GM12878 (cell line): ENCODE measurements at regions of chr11 and their contacts with region 1.

Region 1: GRCh38 chr11:126431401-126432064 is 76.0 kb downstream of the ST3GAL4 start:
- DNase-seq: no peak
- ATAC-seq: no peak
- H3K4me3 ChIP-seq: no peak overlapping the region
- H3K27ac ChIP-seq: no peak overlapping the region
- H3K4me1 ChIP-seq: peaks cover 9% of the 10 kb centered on the region; the same call in 1 of the 2 replicates
- H3K27me3 ChIP-seq: no peaks in the 10 kb centered on the region; a peak in 1 of 4 replicates
- CTCF ChIP-seq: no peak
- EP300 ChIP-seq: no peak
- POLR2A ChIP-seq: no peak
- RAD21 ChIP-seq: no peak

Region 2: GRCh38 chr11:126416542-126417090 is 14.9 kb before region 1 on chr11:
- CTCF ChIA-PET with region 1: interaction called, 7 read pairs
- POLR2A ChIA-PET with region 1: no interaction called
- RAD21 ChIA-PET with region 1: no interaction called
- SMC1A ChIA-PET with region 1: interaction called, 11 read pairs
- in situ Hi-C with region 1: no loop called
- intact Hi-C with region 1: no loop called
- DNase-seq: peak; percentile 27
- ATAC-seq: peak; percentile 88
- H3K4me3 ChIP-seq: 0 out of 2 replicates have a peak overlapping the region, but pooled peaks have one; percentile 17
- H3K27ac ChIP-seq: no peak overlapping the region
- H3K4me1 ChIP-seq: peaks cover 13% of the 10 kb centered on the region
- H3K27me3 ChIP-seq: peaks cover 0 to 2% of the 10 kb centered on the region in 2 experiments; a peak in 2 of 4 replicates
- CTCF ChIP-seq: no peak
- EP300 ChIP-seq: no peak
- POLR2A ChIP-seq: no peak
- RAD21 ChIP-seq: no peak

Region 3: DNA sequence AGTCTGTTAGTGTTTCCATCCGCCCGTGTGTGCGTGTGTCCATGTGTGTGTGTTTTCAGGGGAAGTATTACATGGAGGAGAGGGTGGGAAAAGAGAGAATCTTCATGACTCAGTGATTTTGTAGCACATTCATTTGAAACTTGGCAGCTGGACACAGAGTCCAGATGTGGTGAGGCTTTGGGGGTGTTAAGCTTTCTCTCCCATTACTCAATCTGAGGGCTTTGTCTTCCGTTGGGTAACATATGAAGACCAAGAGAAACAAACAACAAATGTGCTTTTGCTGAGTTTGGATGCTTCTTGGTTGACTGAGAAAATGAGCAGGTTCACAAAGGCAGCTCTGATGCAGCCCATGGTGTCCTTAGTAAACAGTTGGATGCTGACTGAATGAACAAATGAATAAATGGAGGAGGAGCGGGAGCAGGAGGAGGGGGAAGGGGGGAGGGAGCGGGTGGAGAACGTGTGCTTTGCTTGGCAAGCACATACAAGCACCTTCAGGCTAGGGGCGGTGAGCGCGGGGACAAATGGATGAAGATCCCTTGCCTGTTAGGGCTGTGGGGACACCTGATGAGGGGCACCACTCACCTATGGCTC is 28.3 kb after region 1 on chr11:
- CTCF ChIA-PET with region 1: no interaction called
- POLR2A ChIA-PET with region 1: no interaction called
- RAD21 ChIA-PET with region 1: no interaction called
- SMC1A ChIA-PET with region 1: no interaction called
- in situ Hi-C with region 1: no loop called
- intact Hi-C with region 1: loop called (anchors 2 kb)
- DNase-seq: no peak
- ATAC-seq: no peak
- H3K4me3 ChIP-seq: no peak overlapping the region
- H3K27ac ChIP-seq: no peak overlapping the region
- H3K4me1 ChIP-seq: peaks cover 1% of the 10 kb centered on the region
- H3K27me3 ChIP-seq: no peaks in the 10 kb centered on the region; a peak in 3 of 4 replicates
- CTCF ChIP-seq: no peak
- EP300 ChIP-seq: no peak
- POLR2A ChIP-seq: no peak
- RAD21 ChIP-seq: no peak

Region 4: DNA sequence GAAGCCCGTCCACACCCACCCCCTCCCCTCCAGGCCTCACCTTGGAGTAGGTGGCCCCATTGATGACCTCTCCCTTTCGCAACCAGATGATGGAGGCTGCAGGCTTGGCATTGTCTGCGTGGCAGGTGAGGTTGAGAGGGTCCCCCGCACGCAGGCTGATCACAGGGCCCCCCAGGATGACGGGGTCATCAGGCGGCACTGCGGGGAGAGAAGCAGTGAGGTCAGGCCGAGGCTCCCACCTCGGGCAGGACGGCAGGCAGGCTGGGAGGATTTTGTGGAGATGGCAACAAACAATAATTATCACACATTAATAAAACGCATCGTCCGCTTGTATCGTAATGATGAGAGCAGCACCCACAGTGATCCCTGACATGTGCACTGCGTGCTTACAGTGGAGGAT is 41.7 kb after region 1 on chr11:
- CTCF ChIA-PET with region 1: no interaction called
- POLR2A ChIA-PET with region 1: no interaction called
- RAD21 ChIA-PET with region 1: no interaction called
- SMC1A ChIA-PET with region 1: no interaction called
- in situ Hi-C with region 1: no loop called
- intact Hi-C with region 1: no loop called
- DNase-seq: no peak
- ATAC-seq: no peak
- H3K4me3 ChIP-seq: no peak overlapping the region
- H3K27ac ChIP-seq: no peak overlapping the region
- H3K4me1 ChIP-seq: peaks cover 4% of the 10 kb centered on the region
- H3K27me3 ChIP-seq: no peaks in the 10 kb centered on the region; a peak in 1 of 4 replicates
- CTCF ChIP-seq: no peak
- EP300 ChIP-seq: no peak
- POLR2A ChIP-seq: no peak
- RAD21 ChIP-seq: no peak

Region 5: DNA sequence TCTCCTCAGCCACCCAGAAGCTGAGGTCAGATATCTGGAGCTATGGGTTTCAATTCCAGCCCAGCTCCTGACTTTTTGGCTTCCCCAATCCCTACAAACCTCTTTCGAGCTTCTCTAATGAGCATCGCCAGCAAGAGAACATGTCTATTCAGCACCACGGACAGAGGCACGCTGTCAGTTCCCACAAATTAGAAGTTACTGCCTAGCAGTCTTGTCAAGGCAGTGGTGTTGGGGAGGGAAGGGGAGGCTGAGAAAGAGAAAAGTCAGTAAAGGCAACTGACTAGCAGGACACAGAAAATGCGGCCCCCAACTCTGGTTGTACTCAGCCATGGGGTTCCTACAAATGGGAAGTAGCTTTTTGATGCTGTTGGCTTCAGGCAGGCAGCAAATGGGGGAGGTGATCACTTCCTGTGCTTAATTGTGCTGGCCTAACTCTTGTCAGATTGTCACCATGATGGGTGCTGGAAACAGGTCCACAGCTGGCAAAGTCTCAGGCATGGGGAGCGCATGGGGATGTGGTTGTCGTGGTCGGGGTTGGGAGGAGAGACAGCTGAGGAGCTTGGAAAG is 129.9 kb after region 1 on chr11:
- CTCF ChIA-PET with region 1: no interaction called
- POLR2A ChIA-PET with region 1: no interaction called
- RAD21 ChIA-PET with region 1: no interaction called
- SMC1A ChIA-PET with region 1: no interaction called
- in situ Hi-C with region 1: no loop called
- intact Hi-C with region 1: no loop called
- DNase-seq: no peak
- ATAC-seq: no peak
- H3K4me3 ChIP-seq: no peak overlapping the region
- H3K27ac ChIP-seq: no peak overlapping the region
- H3K4me1 ChIP-seq: no peaks in the 10 kb centered on the region
- H3K27me3 ChIP-seq: peaks cover 0 to 3% of the 10 kb centered on the region in 2 experiments; a peak in 2 of 4 replicates
- CTCF ChIP-seq: no peak
- EP300 ChIP-seq: no peak
- POLR2A ChIP-seq: no peak
- RAD21 ChIP-seq: no peak